Activated CD4-positive, alpha-beta T cell treated with anti-CD3 and anti-CD28 coated beads, Interleukin-2, amount 10 ng/mL, durations not matched to agents 7 days and 5 days (primary cell): ENCODE measurements at regions of chr5 and their contacts with region 1.

Region 1: GRCh38 chr5:37837414-37838032 is 2.3 kb downstream of the GDNF start:
- DNase-seq: peak; percentile 63
- H3K4me3 Mint-ChIP-seq: peak overlapping the region; percentile 40
- H3K27ac Mint-ChIP-seq: no peak overlapping the region
- H3K4me1 Mint-ChIP-seq: peaks cover 28% of the 10 kb centered on the region
- H3K27me3 Mint-ChIP-seq: peaks cover 88% of the 10 kb centered on the region

Region 2: DNA sequence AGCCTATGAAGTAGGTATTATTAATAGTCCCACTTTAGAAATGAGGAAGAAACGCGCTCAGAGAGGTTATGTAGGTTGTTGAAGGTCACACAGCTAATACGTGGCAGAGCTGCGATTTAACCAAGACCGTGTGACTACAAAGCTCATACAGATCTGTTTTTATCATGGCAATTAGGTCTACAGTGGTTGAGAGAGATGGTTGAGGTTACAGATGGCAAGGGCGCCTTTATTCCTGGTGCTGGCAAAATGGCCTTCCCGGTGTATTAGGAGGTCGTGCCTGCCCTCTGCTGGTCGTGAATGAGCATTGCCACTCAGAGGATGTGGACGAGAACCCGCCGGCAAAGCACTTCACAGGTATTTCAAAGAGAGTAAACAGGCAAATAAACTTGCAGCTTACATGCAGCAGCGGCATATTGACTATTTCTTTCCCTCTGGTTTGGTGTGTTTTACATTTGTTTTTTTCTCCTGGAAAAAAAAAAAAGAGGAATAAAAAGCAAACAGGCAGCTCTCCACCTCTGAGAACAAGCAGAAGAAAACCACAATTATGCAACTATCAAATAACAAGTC is 355.6 kb after region 1 on chr5:
- CTCF ChIA-PET with region 1: interaction called, 11 read pairs
- POLR2A ChIA-PET with region 1: no interaction called
- DNase-seq: peak; percentile 65
- H3K4me3 Mint-ChIP-seq: no peak overlapping the region
- H3K27ac Mint-ChIP-seq: no peak overlapping the region
- H3K4me1 Mint-ChIP-seq: no peaks in the 10 kb centered on the region
- H3K27me3 Mint-ChIP-seq: peaks cover 23% of the 10 kb centered on the region